Endothelial cell of umbilical vein (primary cell): ENCODE measurements at regions of chr16 and their contacts with region 1.

Region 1: GRCh38 chr16:86680162-86680561 is 101.8 kb downstream of the FOXL1 start:
- DNase-seq: peak; percentile 96
- H3K4me3 ChIP-seq: peak overlapping the region in 1 of 3 experiments; percentile 37
- H3K27ac ChIP-seq: peak overlapping the region; percentile 99
- H3K4me1 ChIP-seq: peaks cover 42% of the 10 kb centered on the region
- H3K27me3 ChIP-seq: no peaks in the 10 kb centered on the region
- CTCF ChIP-seq: no peak
- POLR2A ChIP-seq: peak; percentile 51

Region 2: GRCh38 chr16:86575754-86576557 is 104.2 kb before region 1 on chr16:
- CTCF ChIA-PET with region 1: interaction called, 16 read pairs
- POLR2A ChIA-PET with region 1: no interaction called
- dilution Hi-C with region 1: no loop called
- intact Hi-C with region 1: loop called (anchors 1 kb)
- DNase-seq: peak; percentile 92
- H3K4me3 ChIP-seq: peak overlapping the region; percentile 33 to 67 (median 62)
- H3K27ac ChIP-seq: peak overlapping the region; percentile 82
- H3K4me1 ChIP-seq: peaks cover 56% of the 10 kb centered on the region
- H3K27me3 ChIP-seq: no peaks in the 10 kb centered on the region
- CTCF ChIP-seq: peak; percentile 73 to 74
- POLR2A ChIP-seq: peak; percentile 83

Region 3: DNA sequence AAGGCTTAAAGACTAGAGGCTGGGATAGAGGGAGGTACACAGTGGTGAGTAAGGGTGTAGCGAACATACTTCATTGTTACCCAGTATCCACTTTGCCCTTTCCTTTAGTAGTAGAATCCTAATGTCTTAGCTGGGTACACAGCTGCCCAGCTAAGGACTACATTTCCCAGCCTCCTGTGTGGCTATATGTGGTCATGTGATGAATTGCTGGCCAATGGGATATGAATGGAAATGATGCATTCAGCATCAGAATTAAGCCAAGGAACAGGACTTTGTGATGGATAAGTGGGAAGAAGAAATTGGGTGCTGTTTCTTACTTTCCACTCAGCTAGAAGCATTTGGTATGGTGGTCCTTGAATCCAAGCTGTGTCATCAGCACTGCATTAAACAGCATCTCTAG is 45.9 kb before region 1 on chr16:
- CTCF ChIA-PET with region 1: no interaction called
- POLR2A ChIA-PET with region 1: no interaction called
- dilution Hi-C with region 1: no loop called
- intact Hi-C with region 1: no loop called
- DNase-seq: peak; percentile 32
- H3K4me3 ChIP-seq: no peak overlapping the region
- H3K27ac ChIP-seq: no peak overlapping the region
- H3K4me1 ChIP-seq: peaks cover 9% of the 10 kb centered on the region
- H3K27me3 ChIP-seq: no peaks in the 10 kb centered on the region
- CTCF ChIP-seq: no peak
- POLR2A ChIP-seq: no peak

Region 4: DNA sequence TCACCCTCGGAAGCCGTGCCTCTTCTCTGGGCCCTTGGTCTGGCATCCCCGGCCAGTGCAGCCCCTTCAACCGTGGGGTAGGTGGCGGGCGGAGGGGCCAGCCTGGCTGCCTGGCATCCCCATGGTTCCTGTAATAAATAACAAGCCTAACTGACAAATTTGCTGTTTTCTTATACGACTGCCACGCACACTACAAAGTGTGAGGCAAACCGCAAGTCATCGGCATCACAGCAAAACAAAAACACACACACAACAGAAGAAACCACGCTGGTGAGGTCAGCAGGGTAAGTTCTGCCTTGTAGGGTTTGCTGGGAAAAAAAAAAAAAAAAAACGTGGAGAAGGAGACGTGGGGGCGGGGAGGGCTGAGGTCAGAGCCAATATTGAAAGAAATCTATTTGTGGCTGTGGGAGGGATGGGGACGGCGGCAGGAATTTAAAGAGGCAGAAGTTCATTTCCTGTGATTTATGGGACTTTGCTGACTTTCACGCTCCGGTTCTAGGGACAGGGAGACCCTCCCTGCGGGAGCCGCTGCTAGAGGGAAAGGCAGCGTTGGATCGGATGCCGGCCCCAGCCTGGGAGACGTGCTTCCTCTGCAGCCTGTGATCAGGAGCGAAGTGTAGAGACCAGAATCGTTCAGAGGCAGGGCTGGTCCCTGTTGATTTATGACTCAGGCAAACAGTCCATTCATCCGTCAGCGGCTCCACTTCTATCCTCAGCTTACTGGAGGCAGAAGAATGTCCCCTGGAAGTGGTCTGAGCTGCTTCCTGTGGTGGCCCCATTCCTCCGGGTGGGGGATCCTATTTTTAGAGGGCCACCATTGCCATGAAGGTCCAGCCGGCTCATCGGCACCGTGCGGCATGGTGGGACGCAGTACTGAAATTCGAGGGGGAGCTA is 61.0 kb after region 1 on chr16:
- CTCF ChIA-PET with region 1: no interaction called
- POLR2A ChIA-PET with region 1: no interaction called
- dilution Hi-C with region 1: no loop called
- intact Hi-C with region 1: loop called (anchors 1 kb)
- DNase-seq: peak; percentile 92
- H3K4me3 ChIP-seq: peak overlapping the region in 2 of 3 experiments; percentile 15 to 31
- H3K27ac ChIP-seq: peak overlapping the region; percentile 96
- H3K4me1 ChIP-seq: peaks cover 19% of the 10 kb centered on the region
- H3K27me3 ChIP-seq: no peaks in the 10 kb centered on the region
- CTCF ChIP-seq: no peak
- POLR2A ChIP-seq: peak; percentile 75

Region 5: GRCh38 chr16:86823895-86824671 is 143.9 kb after region 1 on chr16:
- CTCF ChIA-PET with region 1: interaction called, 3 read pairs
- POLR2A ChIA-PET with region 1: no interaction called
- dilution Hi-C with region 1: no loop called
- intact Hi-C with region 1: loop called (anchors 2 kb)
- DNase-seq: peak; percentile 87
- H3K4me3 ChIP-seq: peak overlapping the region in 1 of 3 experiments; percentile 7
- H3K27ac ChIP-seq: peak overlapping the region; percentile 93
- H3K4me1 ChIP-seq: peaks cover 50% of the 10 kb centered on the region
- H3K27me3 ChIP-seq: no peaks in the 10 kb centered on the region
- CTCF ChIP-seq: no peak
- POLR2A ChIP-seq: peak; percentile 50